Heart left ventricle (tissue), 16 donors: ENCODE measurements at regions of chr3 and their contacts with region 1.

Region 1: DNA sequence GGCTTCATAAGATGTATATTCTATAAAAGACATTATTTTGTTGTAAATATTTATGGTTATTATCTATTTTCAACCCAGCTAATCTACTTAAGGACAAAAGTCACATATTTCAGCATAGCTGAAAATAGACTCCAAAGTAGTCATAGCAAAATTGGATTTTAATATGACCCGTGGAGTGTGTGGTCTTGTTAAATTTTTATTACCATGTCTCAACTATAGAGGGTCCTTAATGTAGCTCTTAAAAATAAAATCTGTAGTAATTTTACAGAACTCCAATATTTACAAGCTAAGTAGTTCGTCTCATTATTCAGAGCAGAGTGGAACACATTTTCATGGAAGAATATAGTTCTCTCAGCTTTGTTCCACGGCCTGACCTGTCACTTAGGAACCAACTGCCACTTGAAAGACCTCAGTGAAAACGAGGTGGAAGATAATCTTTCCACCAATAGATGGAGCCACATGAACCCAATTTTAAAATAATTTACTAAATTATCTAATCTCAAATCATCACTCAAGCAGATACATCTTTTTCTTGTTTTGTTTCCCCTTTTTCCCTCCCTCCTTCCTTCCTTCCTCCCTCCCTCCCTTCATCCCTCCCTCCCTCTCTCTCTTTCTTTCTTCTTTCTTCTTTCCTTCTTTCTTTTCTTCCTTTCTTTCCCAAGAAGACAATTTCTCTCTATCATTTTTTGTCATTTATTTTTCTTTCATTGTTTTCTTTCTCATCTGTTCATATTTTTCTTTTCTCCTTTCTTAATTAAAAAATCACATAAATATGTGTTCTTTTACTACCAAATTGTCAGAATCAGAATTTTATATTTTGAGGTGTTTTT is 97.2 kb downstream of the CLDN1 start:
- DNase-seq: no peak
- ATAC-seq: no peak
- H3K4me3 ChIP-seq: no peak overlapping the region
- H3K27ac ChIP-seq: no peak overlapping the region
- H3K4me1 ChIP-seq: peaks cover 0 to 5% (median 0%) of the 10 kb centered on the region in 12 donors
- H3K27me3 ChIP-seq: no peaks in the 10 kb centered on the region
- CTCF ChIP-seq: peak in 11 of 12 donors; percentile 6 to 61 (median 34)
- POLR2A ChIP-seq: no peak

Region 2: GRCh38 chr3:190265796-190266195 is 40.7 kb after region 1 on chr3:
- intact Hi-C with region 1: no loop called
- DNase-seq: no peak
- ATAC-seq: no peak
- H3K4me3 ChIP-seq: no peak overlapping the region
- H3K27ac ChIP-seq: no peak overlapping the region
- H3K4me1 ChIP-seq: peaks cover 0 to 10% (median 0%) of the 10 kb centered on the region in 12 donors
- H3K27me3 ChIP-seq: no peaks in the 10 kb centered on the region
- CTCF ChIP-seq: no peak
- POLR2A ChIP-seq: no peak

Region 3: DNA sequence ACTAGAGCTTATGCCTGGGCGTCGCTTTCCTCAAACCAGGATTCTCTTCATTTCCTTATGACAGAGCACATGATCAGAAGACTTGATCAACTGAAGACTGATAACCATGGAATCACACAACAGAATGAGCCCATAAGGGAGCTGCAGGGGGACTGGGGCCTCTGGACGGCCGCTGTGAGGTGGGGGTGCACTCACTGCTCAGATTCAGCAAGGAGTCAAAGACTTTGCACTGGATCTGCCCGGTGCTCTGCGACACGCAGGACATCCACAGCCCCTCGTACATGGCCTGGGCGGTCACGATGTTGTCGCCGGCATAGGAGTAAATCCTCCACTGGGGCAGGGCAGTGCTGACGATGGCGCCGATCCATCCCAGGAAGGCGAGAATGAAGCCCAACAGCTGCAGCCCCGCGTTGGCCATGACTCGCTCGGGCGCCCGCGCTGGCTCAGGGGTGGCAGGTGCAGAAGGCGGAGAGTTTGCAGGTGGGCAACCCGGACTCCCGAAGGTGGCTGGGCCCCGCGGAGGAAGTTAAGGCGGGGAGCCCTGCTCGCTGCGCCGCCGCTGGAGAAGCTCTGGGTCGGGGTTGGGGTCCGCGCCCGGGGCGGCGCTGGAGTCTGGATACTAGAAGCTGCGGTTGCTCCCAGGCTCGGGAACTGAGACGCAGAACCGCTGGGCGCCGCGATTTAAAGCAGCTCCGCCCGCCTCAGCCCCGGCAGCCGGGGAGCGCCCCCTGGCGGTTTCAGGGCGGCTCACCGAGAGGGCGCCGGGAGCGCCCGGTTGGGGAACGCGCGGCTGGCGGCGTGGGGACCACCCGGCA is 96.9 kb after region 1 on chr3 and contains the start of gene CLDN1:
- intact Hi-C with region 1: loop called in 8 of 10 experiments (anchors 1 to 10 kb)
- DNase-seq: peak; percentile 76 to 89 (median 79)
- ATAC-seq: peak; percentile 72 to 96 (median 92)
- H3K4me3 ChIP-seq: peak within 1 kb of the TSS; percentile 30 to 72 (median 60)
- H3K27ac ChIP-seq: no peak within 1 kb of the TSS
- H3K4me1 ChIP-seq: peaks cover 0 to 18% (median 13%) of the 10 kb centered on the region in 12 donors
- H3K27me3 ChIP-seq: peaks cover 0 to 25% (median 0%) of the 10 kb centered on the region in 9 donors
- CTCF ChIP-seq: peak; percentile 93 to 99 (median 96)
- POLR2A ChIP-seq: no peak
- total RNA-seq, gene CLDN1: 0.13 to 45.0 (median 0.31) TPM in 6 of 9 donors, not detected in the others

Region 4: GRCh38 chr3:190424478-190425439 is 199.7 kb after region 1 on chr3:
- intact Hi-C with region 1: loop called in 4 of 10 experiments (anchors 5 to 10 kb)
- DNase-seq: peak in 4 of 5 donors; percentile 20 to 62 (median 44)
- ATAC-seq: peak in 3 of 4 donors; percentile 18 to 67 (median 42)
- H3K4me3 ChIP-seq: no peak overlapping the region
- H3K27ac ChIP-seq: no peak overlapping the region
- H3K4me1 ChIP-seq: peaks cover 0 to 5% (median 0%) of the 10 kb centered on the region in 12 donors
- H3K27me3 ChIP-seq: no peaks in the 10 kb centered on the region
- CTCF ChIP-seq: peak; percentile 36 to 77 (median 60)
- POLR2A ChIP-seq: no peak